WTC11 (cell line): ENCODE measurements at regions of chr4 and their contacts with region 1.

Region 1: DNA sequence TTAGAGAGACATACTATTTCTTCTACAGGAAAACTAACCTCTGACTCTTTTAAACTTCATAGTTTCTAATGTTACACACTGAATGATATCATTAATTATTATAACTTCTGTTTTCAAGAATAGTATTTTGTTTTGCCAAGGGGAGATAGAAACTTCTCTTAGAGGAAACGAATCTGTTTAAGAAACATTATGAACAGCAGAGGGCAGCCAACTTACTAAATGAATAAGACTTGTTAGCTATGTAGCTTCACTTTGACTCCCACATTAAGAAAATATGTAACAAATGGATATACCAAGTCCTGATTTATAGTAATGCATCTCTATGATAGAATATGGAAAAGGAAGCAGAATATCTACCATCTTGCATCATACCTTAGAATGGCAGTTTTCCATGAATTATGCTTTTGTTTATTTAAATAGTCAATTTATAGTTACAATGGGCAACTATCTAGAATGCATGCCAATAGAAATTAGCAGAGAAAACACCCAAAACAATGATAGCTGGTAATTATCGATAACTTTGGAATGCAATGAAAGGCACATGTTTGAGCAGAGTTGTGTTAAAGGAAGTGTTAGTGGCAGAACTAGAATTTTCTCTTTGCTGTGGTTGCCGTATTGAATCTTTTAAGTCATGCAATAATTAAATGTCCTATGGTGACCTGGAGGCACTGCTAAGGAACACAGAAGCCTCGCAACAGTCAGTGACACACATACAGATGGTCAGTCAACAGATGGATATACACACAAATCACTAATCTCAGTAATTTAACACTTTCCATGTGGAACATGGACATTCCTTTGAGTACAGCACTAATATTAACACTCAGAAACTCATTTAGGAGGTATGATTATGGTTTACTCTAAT is 105.7 kb upstream of the PDLIM3 start:
- DNase-seq: no peak
- ATAC-seq: no peak
- H3K4me3 Mint-ChIP-seq: no peak overlapping the region
- H3K27ac Mint-ChIP-seq: peak overlapping the region; percentile 77
- H3K4me1 Mint-ChIP-seq: peaks cover 58% of the 10 kb centered on the region
- H3K27me3 Mint-ChIP-seq: no peaks in the 10 kb centered on the region
- CTCF ChIP-seq: no peak

Region 2: DNA sequence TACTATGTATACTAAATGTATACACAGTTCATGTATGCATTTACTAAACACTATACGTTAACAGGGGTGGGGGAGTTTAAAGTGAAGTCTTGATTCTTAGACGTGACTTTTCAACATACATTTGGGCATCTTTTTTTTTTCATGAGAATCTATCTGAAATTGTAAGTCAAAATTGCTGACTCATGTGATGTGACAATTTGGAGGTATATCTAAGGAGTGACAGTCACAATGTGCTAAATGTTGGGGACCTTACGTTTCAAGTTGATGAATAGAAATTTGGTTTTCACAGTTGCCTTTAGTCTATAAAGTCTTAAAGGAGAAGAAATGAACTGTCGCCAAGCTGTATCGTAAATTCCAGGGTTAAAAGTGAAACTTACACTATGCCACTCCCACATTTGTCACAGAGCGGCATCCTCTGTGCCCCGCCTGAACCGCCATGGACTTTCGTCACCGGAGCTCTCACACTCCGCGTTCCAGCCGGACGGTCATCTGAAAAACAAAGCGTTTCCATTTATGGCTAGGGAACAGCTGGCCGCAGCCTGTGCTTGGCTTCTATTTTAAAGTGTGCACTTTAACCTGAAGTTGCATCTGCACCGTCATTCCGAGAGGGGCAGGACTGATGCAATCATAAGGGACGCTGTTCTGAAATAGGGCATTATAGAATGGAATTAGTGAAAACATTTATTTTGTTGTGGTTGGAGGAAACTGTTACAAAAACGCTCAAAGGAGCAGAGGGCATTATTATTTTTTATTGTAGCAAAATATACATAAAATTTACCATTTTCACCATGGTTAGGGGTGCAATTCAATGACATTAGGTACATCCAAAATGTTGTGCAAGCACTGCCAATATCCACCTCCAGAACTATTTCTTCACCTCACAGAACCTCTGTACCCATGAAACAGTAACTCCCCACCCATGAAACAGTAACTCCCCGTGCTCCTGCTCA is 136.7 kb before region 1 on chr4:
- CTCF ChIA-PET with region 1: no interaction called
- POLR2A ChIA-PET with region 1: no interaction called
- DNase-seq: no peak
- ATAC-seq: no peak
- H3K4me3 Mint-ChIP-seq: no peak overlapping the region
- H3K27ac Mint-ChIP-seq: no peak overlapping the region
- H3K4me1 Mint-ChIP-seq: no peaks in the 10 kb centered on the region
- H3K27me3 Mint-ChIP-seq: no peaks in the 10 kb centered on the region; the same call in 1 of the 2 replicates
- CTCF ChIP-seq: no peak

Region 3: GRCh38 chr4:185656467-185656931 is 15.5 kb after region 1 on chr4:
- CTCF ChIA-PET with region 1: interaction called, 10 read pairs
- POLR2A ChIA-PET with region 1: no interaction called
- DNase-seq: peak; percentile 47
- ATAC-seq: peak; percentile 60
- H3K4me3 Mint-ChIP-seq: no peak overlapping the region
- H3K27ac Mint-ChIP-seq: peak overlapping the region; percentile 94
- H3K4me1 Mint-ChIP-seq: peaks cover 60% of the 10 kb centered on the region
- H3K27me3 Mint-ChIP-seq: no peaks in the 10 kb centered on the region
- CTCF ChIP-seq: no peak

Region 4: GRCh38 chr4:185682236-185682635 is 41.2 kb after region 1 on chr4:
- CTCF ChIA-PET with region 1: no interaction called
- POLR2A ChIA-PET with region 1: no interaction called
- DNase-seq: no peak
- ATAC-seq: no peak
- H3K4me3 Mint-ChIP-seq: no peak overlapping the region
- H3K27ac Mint-ChIP-seq: no peak overlapping the region
- H3K4me1 Mint-ChIP-seq: peaks cover 18% of the 10 kb centered on the region
- H3K27me3 Mint-ChIP-seq: no peaks in the 10 kb centered on the region
- CTCF ChIP-seq: no peak

Region 5: DNA sequence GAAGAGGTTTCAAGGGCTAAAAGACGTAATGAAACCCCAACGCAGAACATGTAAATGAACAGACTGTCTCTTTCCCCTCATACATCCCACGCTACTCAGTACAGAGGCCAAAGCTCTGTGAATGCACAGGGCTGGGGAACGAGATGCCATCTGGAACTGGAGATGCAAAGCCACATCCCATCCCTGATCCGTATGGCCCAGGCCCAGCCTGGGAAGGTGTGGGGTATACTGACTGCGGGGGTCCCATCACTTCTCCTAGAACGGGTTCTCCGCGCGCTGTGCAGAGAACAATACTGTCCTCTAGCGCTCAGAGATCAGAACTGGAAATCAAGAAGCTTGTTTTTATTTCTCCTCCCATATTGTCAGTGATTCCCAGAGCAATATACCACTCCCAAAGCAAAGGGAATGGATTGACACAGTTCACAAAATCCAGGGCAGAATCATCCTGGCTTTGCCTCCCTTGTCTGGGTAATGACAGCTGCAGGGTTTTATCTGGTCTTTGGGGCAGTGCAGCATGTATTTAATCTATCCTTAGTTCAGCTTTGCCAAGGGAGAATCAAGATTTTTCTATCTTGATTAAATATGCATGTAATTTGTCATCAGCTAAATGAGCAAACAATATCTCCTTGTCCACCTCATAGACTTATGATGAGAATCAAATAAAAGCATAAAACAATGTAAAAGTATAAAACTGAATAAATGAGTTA is 380.6 kb after region 1 on chr4:
- CTCF ChIA-PET with region 1: interaction called, 78 read pairs
- POLR2A ChIA-PET with region 1: no interaction called
- DNase-seq: peak; percentile 73
- ATAC-seq: peak; percentile 97
- H3K4me3 Mint-ChIP-seq: no peak overlapping the region
- H3K27ac Mint-ChIP-seq: no peak overlapping the region
- H3K4me1 Mint-ChIP-seq: peaks cover 35% of the 10 kb centered on the region
- H3K27me3 Mint-ChIP-seq: peaks cover 7% of the 10 kb centered on the region
- CTCF ChIP-seq: peak; percentile 58

Region 6: DNA sequence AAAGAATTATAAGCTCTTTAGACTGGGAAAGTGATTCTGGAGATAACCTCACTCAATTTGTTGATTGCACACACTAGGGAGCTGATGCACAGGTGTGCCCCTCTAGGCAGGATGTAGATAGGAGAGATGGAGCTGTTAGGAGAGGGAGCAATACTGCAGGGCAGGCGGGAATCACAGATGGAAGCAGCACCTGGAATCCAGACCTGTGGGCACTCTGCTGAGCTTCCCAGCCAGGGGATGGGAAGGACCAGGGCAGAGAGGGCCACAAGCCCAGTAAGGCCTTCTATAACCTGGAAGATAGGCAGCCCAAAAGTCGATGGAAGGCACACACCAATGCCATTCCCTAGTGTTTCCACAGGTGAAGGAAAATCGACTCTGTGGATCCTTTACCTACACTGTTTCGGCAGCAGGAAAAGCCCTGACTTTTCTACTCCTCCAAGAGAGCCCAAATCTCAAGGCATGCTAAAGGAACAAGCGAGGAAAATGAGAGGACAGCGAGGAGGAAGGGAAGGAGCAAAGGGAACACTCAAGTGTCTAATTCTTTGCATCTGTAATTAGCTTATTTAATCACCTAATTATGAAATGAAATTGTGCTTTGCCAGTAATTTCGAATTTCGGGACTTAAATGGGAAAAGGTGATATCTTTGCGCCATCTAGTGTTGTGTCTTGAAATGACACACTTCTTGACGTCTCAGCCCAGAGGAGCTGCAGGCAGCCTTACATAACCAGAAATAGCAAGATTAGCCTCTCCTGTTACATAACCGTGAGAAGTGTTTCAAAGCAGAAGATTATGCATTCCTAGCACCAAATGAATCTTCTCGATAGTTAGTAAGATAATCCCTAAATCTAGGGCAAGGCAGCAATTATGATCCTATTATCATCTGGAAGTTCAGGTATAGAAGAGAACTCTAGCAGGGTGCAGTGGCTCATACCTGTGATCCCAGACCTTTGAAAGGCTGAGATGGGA is 396.9 kb after region 1 on chr4:
- CTCF ChIA-PET with region 1: interaction called, 33 read pairs
- POLR2A ChIA-PET with region 1: no interaction called
- DNase-seq: no peak
- ATAC-seq: peak; percentile 83
- H3K4me3 Mint-ChIP-seq: no peak overlapping the region
- H3K27ac Mint-ChIP-seq: 0 out of 2 replicates have a peak overlapping the region, but pooled peaks have one; percentile 60
- H3K4me1 Mint-ChIP-seq: peaks cover 9% of the 10 kb centered on the region; the same call in 1 of the 2 replicates
- H3K27me3 Mint-ChIP-seq: peaks cover 17% of the 10 kb centered on the region
- CTCF ChIP-seq: peak; percentile 81